ENCODE measurements at regions of chr11 and their contacts with region 1.

Region 1: GRCh38 chr11:60970369-60970774 is 1.1 kb upstream of the CD6 start:
- DNase-seq: peak in 1 of 2 experiments; percentile 69
- H3K4me3 ChIP-seq: no peak overlapping the region
- H3K27ac ChIP-seq: no peak overlapping the region
- H3K4me1 ChIP-seq: no peaks in the 10 kb centered on the region
- H3K27me3 ChIP-seq: peaks cover 14% of the 10 kb centered on the region
- CTCF ChIP-seq: peak; percentile 94

Region 2: DNA sequence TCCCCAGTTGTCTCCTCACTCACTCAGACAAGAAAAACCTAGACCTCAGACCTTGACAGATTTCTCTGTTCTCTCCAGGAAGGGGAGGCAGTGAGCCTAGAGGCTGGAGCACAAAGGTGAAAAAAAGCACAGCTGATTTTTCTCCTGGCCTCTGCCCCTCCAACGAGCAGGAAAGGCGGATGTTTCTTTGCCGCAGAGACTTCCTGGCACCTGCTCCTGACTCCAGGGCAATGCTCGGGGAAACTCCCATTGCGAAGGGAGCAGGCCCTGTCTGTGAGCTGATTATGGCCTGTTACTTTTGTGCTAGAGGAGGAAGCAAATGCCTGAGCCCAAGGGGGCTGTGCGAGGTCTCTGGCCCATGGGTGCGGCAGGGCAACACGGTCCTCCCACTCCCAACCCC is 159.8 kb before region 1 on chr11:
- CTCF ChIA-PET with region 1: no interaction called
- POLR2A ChIA-PET with region 1: no interaction called
- intact Hi-C with region 1: no loop called
- DNase-seq: no peak
- H3K4me3 ChIP-seq: no peak overlapping the region
- H3K27ac ChIP-seq: no peak overlapping the region
- H3K4me1 ChIP-seq: no peaks in the 10 kb centered on the region
- H3K27me3 ChIP-seq: peaks cover 59% of the 10 kb centered on the region
- CTCF ChIP-seq: no peak

Region 3: GRCh38 chr11:60932605-60933356 is 37.6 kb before region 1 on chr11:
- CTCF ChIA-PET with region 1: no interaction called
- POLR2A ChIA-PET with region 1: no interaction called
- intact Hi-C with region 1: no loop called
- DNase-seq: peak in 1 of 2 experiments; percentile 43
- H3K4me3 ChIP-seq: no peak overlapping the region
- H3K27ac ChIP-seq: no peak overlapping the region
- H3K4me1 ChIP-seq: no peaks in the 10 kb centered on the region
- H3K27me3 ChIP-seq: no peaks in the 10 kb centered on the region
- CTCF ChIP-seq: no peak

Region 4: GRCh38 chr11:61173456-61173855 is 203.1 kb after region 1 on chr11:
- CTCF ChIA-PET with region 1: no interaction called
- POLR2A ChIA-PET with region 1: no interaction called
- intact Hi-C with region 1: loop called (anchors 1 kb)
- DNase-seq: peak; percentile 35 to 86
- H3K4me3 ChIP-seq: no peak overlapping the region
- H3K27ac ChIP-seq: no peak overlapping the region
- H3K4me1 ChIP-seq: no peaks in the 10 kb centered on the region
- H3K27me3 ChIP-seq: peaks cover 24% of the 10 kb centered on the region
- CTCF ChIP-seq: peak; percentile 66

Region 5: GRCh38 chr11:62024936-62025486 is 1054.6 kb after region 1 on chr11:
- CTCF ChIA-PET with region 1: no interaction called
- POLR2A ChIA-PET with region 1: no interaction called
- intact Hi-C with region 1: no loop called
- DNase-seq: no peak
- H3K4me3 ChIP-seq: peak overlapping the region; percentile 18; the same call in 1 of the 2 replicates
- H3K27ac ChIP-seq: peak overlapping the region; percentile 89
- H3K4me1 ChIP-seq: peaks cover 36% of the 10 kb centered on the region
- H3K27me3 ChIP-seq: no peaks in the 10 kb centered on the region
- CTCF ChIP-seq: no peak

Measured in PC-9 (cell line).